ENCODE measurements at regions of chr17 and their contacts with region 1.

Region 1: GRCh38 chr17:41060052-41060604 is at the start of gene KRTAP2-3:
- DNase-seq: peak; percentile 95
- H3K4me3 ChIP-seq: peak within 1 kb of the TSS; percentile 15
- CTCF ChIP-seq: no peak

Region 2: GRCh38 chr17:40909351-40909750 is 150.8 kb before region 1 on chr17:
- CTCF ChIA-PET with region 1: interaction called, 11 read pairs
- POLR2A ChIA-PET with region 1: interaction called, 29 read pairs
- DNase-seq: peak; percentile 93
- H3K4me3 ChIP-seq: no peak overlapping the region
- CTCF ChIP-seq: peak; percentile 64

Region 3: DNA sequence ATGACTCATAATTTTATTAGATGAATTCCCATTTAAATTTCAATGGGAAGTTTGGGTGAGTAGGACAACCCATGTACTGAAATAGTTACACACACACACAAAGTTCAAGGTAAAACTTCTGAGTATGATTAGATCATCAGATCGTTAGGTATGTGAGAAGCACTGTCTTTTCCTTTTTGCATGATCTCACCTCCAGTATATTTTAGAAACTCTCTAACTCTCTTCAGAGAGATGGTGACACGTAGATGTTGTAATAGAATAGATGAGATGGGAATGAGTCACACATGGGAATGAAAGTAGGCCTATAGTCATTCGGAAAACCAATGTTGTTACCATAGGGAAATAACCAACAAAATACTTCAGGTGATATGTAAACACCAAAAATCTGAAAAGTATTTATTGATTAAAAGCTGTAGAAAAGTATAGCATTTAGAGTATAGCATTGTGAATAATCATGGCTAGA is 144.9 kb before region 1 on chr17:
- CTCF ChIA-PET with region 1: interaction called, 11 read pairs
- POLR2A ChIA-PET with region 1: interaction called, 29 read pairs
- DNase-seq: peak; percentile 94
- H3K4me3 ChIP-seq: no peak overlapping the region
- CTCF ChIP-seq: no peak

Region 4: DNA sequence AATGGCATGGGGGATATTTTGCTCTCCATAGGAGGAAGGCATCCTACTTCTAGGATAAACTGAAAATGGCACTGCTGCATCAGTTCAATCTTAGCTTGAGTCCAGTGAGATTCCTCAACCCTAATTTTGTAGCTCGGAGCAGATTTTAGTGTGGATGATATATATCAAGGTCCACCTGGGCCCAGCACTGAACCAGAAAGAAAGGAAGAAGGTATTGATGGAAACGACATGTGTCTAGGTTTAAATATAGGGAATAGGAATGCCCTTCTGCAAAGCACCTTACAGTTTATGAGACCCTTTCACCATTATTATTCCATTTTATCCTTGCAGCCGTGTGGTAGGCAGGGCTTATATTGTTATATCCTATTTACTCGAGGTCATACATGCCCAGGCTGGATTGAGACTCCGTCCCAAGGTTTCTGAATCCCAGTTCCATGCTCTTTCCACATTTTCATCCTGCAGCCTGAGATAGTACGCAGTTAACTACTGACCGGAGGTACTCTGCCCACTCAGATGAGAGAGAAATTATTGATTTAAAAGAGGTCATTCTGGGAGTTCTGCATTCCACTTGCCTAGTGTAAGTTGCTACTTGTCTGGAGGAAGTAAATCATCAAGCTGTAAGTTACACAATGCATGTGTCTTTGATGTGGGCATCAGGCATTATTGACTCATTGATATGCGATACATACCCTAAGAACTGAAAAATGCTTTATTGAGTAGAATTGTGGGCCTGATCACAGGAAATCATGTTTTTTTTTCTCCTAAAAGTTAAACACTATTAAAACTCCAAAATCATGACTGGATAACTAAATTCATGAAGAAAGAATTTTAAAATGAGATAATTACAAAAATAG is 103.5 kb before region 1 on chr17:
- CTCF ChIA-PET with region 1: interaction called, 4 read pairs
- POLR2A ChIA-PET with region 1: interaction called, 11 read pairs
- DNase-seq: peak; percentile 100
- H3K4me3 ChIP-seq: no peak overlapping the region
- CTCF ChIP-seq: no peak

Region 5: DNA sequence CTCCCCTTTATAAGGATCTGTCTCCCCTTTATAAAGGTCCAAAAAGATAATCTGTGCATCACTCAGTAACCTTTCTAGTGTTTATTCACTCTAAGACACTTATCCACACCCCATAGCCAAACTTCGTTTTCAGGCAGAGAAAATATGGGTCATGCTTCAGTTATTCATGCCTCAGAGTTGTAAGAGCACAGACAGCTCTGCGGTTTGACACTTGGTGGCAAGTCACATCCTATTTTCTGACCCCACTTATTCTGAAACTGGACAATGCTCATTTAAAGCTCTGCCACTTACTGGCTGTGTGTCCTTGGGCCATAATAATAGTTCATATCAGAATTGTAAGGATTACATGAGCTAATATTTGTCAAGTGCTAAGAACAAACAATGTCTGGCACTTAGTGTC is 11.0 kb before region 1 on chr17:
- CTCF ChIA-PET with region 1: interaction called, 10 read pairs
- POLR2A ChIA-PET with region 1: interaction called, 31 read pairs
- DNase-seq: no peak
- H3K4me3 ChIP-seq: no peak overlapping the region
- CTCF ChIP-seq: no peak

Region 6: DNA sequence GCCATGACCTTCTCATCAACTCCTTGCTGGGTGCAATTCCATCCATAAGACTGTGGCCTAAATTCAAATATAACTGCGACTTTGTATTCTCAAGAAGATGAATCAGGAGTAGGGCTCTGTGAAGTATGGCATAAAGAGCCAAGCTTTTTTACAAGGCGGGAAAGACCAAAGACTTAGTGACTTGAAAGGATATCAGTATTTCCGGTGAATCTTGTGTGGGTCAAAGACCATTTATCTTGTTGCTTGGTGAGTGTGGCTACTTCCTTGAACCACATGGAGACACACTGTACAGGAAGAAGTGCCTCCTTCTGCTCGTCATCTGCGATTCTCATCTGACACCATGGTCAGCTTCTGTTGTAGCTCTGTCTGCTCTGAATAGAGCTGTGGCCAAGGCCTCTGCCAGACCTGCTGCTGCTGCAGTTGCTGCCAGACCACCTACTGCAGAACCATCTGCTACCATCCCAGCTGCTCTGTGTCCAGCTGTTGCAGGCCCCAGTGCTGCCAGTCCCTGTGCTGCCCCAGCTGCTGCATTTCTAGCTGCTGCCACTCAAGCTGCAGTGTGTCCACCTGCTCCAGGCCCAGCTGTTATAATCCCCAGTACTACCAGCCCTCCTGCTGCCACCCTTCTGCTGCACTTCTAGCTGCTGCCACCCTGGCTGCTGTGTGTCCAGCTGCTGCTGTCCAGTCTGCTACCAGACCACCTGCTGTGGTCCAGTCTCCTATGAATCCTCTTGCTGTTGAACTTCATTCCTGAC is 11.7 kb after region 1 on chr17:
- CTCF ChIA-PET with region 1: no interaction called
- POLR2A ChIA-PET with region 1: no interaction called
- DNase-seq: no peak
- H3K4me3 ChIP-seq: no peak overlapping the region
- CTCF ChIP-seq: no peak

Measured in AG04449 (cell line).